ENCODE measurements at regions of chr9 and their contacts with region 1.

Region 1: DNA sequence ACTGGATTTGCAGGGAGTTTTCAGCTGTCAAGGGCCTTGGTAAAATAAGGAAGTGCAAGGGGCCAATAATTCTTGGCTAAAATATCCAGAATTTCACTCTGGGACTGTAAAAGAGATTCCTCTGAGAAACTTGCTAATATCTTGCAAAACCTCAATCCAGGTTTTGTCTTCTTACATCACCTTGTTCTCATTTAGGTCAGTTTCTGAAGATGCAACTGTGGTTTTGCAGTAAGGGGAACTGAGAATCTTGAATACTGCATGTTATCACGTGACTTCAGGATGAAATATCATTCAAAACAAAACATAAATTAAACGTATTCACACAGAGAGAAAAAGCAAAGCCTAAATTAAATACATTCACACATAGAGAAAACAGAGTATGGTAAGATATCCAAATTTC is 35.0 kb upstream of the RIC1 start:
- DNase-seq: no peak
- ATAC-seq: no peak
- H3K4me3 ChIP-seq: no peak overlapping the region
- H3K27ac ChIP-seq: no peak overlapping the region
- H3K4me1 ChIP-seq: no peaks in the 10 kb centered on the region
- H3K27me3 ChIP-seq: no peaks in the 10 kb centered on the region

Region 2: DNA sequence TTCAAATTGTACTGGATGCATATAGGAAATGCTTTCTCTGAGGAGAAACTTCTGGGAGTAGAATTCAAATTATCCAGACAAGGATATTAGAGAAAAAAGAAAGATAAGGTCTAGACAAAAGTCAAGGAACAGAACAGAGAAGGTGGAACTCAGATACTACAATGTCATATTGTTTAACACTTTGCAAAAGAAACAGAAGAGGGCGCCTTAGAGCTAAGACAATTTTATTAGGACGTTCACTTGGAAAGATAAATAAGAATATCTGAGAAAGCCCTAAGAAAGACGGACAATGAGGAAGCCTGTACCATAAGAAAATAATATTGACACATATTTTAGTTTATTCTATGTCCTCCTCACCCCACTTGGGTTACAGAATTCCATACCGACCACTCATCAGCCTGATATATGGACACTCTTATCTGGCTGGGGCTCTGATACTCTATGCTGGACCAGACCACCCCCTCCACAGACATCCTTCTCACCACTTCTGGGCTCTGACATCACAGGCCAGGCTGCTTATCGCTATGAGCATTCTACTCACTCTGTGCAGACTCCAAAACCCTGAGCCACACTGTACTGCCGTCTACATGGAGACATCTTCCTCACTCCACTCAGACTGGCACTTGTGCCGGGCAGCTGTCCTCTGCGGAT is 843.8 kb before region 1 on chr9:
- intact Hi-C with region 1: loop called in 2 of 4 experiments (anchors 10 kb)
- DNase-seq: no peak
- ATAC-seq: peak in 1 of 2 donors; percentile 66
- H3K4me3 ChIP-seq: no peak overlapping the region
- H3K27ac ChIP-seq: no peak overlapping the region
- H3K4me1 ChIP-seq: peaks cover 2% of the 10 kb centered on the region
- H3K27me3 ChIP-seq: no peaks in the 10 kb centered on the region

Region 3: DNA sequence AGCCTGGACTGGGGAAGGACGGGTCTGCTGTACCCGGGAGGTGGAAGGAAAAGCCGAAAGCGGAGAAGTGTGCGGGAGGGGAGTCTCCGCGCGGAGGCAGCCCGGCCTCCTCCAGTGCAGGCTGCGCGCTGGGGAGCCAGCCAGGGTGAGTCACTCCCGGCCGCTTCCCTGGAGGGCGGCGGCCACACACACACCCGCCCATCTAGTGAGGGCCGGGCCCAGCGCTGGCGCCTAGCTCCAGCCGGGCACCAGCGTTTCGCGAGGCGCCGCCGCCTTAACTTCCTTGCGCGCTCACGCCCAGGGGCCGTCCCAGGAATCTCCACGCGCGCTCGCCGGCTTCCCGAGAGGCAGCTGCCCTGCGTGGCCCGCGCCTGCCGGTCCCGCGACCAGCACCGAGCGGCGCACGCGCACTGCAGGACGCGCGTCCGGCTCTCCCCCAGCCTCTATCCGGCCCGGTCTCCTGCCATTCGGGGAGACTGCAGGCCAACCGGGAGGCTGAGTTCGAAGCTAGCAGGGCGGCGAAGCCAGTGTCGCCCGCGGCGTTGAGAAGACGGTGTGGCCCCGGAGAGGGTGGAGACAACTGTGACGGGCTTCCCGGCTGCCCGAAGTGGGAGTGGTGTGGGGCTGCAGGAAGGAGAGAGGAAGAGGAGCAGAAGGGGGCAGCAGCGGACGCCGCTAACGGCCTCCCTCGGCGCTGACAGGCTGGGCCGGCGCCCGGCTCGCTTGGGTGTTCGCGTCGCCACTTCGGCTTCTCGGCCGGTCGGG is 609.1 kb before region 1 on chr9 and contains the start of gene JAK2:
- intact Hi-C with region 1: loop called in 1 of 4 experiments (anchors 10 kb)
- DNase-seq: peak; percentile 95 to 98 (median 97)
- ATAC-seq: peak; percentile 97 to 99
- H3K4me3 ChIP-seq: peak within 1 kb of the TSS; percentile 83
- H3K27ac ChIP-seq: peak within 1 kb of the TSS; percentile 95
- H3K4me1 ChIP-seq: peaks cover 6% of the 10 kb centered on the region
- H3K27me3 ChIP-seq: no peaks in the 10 kb centered on the region
- total RNA-seq, gene JAK2: 10.4 to 14.6 (median 12.2) TPM

Region 4: GRCh38 chr9:5437254-5438216 is 156.4 kb before region 1 on chr9 and contains the start of gene PLGRKT:
- intact Hi-C with region 1: loop called in 2 of 4 experiments (anchors 5 to 10 kb)
- DNase-seq: peak; percentile 97 to 98 (median 98)
- ATAC-seq: peak; percentile 99 to 100
- H3K4me3 ChIP-seq: peak within 1 kb of the TSS; percentile 61
- H3K27ac ChIP-seq: peak within 1 kb of the TSS; percentile 91
- H3K4me1 ChIP-seq: peaks cover 5% of the 10 kb centered on the region
- H3K27me3 ChIP-seq: no peaks in the 10 kb centered on the region
- total RNA-seq, gene PLGRKT: 31.5 to 40.3 (median 34.1) TPM

Region 5: GRCh38 chr9:5608298-5609225 is 14.7 kb after region 1 on chr9:
- intact Hi-C with region 1: no loop called
- DNase-seq: no peak
- ATAC-seq: peak; percentile 80 to 85
- H3K4me3 ChIP-seq: peak overlapping the region; percentile 66
- H3K27ac ChIP-seq: peak overlapping the region; percentile 85
- H3K4me1 ChIP-seq: peaks cover 4% of the 10 kb centered on the region
- H3K27me3 ChIP-seq: no peaks in the 10 kb centered on the region

Measured in right cardiac atrium (tissue), 5 donors.